Esophagus muscularis mucosa (tissue), 4 donors: ENCODE measurements at regions of chr7 and their contacts with region 1.

Region 1: GRCh38 chr7:140673063-140673773 is 473 bp downstream of the ADCK2 start:
- DNase-seq: no peak
- H3K4me3 ChIP-seq: peak overlapping the region; percentile 75 to 93 (median 78)
- H3K27ac ChIP-seq: peak overlapping the region; percentile 84 to 91 (median 88)
- H3K4me1 ChIP-seq: peaks cover 28 to 48% (median 40%) of the 10 kb centered on the region in 4 donors
- H3K27me3 ChIP-seq: no peaks in the 10 kb centered on the region
- CTCF ChIP-seq: no peak
- EP300 ChIP-seq: no peak
- POLR2A ChIP-seq: no peak

Region 2: DNA sequence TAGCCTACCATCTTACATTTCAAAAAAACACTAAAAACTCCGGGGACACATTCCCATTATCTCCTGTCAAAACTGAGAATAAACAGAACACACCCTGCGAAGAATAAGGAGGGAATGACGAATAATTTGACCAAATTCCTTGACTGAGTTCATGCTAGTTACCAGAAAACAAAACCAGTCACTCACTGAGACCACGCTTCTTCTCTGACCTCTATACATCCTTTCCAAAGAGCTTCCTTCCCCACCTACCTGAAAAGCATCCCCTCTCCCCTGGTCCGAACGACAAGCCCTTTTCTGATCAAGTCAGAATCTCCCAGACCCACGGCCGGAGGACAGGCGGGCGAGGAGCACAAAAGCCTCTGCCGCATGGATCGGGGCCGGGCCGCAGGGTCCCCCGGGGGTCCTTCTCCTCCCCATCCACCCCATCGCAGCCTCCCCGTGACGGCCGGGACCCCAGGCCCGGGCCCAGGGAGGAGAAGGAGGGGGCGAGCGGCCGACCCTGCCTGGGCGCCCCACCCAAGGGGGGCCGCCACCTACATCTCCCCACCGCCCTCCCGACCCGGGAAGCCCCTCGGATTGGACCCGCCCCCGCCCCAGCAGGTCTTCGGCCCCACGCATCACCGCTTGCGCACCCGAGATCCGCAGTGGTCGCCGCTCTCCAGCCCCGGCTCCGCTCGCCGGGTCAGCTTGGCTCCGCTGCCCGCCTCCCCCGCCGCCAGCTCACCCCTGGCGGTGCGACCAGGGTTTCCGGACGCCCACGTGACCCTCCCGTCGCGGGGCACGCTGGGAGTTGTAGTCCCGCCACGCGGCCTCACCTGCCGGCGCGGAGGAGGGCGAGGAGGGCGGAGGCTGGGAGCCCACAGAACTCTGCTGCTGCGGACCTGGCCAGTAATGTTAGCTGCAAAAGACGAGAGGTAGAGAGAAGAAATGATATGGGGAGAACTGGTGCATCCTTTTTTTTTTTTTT is 275.2 kb before region 1 on chr7 and contains the start of gene SLC37A3:
- intact Hi-C with region 1: loop called (anchors 10 kb)
- DNase-seq: peak; percentile 95
- H3K4me3 ChIP-seq: peak within 1 kb of the TSS; percentile 89 to 100 (median 100)
- H3K27ac ChIP-seq: peak within 1 kb of the TSS; percentile 88 to 96 (median 94)
- H3K4me1 ChIP-seq: peaks cover 8 to 26% (median 22%) of the 10 kb centered on the region in 4 donors
- H3K27me3 ChIP-seq: peaks cover 0 to 9% (median 0%) of the 10 kb centered on the region in 4 donors
- CTCF ChIP-seq: peak in 2 of 3 experiments; percentile 22 to 35
- EP300 ChIP-seq: no peak
- POLR2A ChIP-seq: peak; percentile 56
- total RNA-seq, gene SLC37A3: 33.1 to 67.8 (median 49.0) TPM